Left cardiac atrium (tissue), 4 donors: ENCODE measurements at regions of chr2 and their contacts with region 1.

Region 1: DNA sequence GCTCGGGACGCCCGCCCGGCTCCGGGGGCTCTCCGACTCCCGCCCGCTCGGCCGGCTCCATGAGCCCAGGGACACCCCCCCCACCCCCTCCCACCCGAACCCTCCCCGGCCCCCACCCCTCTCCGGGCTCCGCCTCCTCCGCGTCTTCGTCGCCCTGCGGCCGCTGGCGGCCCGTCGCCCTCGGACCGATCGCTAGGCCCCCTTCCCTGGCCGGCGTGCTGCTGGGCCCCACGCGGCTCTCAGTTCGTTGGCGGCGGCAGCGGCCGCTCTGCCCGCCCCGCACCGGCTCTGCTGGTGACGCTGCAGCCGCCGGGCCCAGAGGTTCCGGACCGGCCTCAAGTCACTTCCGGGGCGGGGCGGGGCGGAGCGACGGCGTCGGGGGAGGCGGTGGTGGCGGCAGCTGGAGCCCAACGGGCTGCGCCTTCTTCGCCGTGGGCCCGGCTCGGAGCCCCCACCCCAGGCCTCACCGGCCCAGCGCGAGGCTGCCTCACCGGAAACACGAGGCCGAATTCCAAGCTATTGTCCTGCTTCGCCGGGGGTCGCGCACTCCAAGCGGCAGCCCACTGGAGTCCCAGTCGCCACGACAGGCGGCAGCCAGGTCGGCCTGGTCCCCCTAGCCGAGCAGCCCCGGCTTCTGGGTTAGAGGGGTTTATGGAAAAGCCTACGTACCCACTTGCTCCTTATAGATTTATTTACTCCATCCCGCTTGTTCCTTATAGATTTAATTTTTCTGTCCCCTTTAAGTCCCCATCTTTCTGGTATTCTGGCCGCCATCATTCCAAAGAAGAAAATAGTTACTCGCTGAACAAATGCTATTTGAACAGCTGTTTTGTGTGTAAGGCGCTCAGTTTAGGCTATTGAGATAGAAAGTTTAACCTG is at the start of gene PSME4:
- DNase-seq: peak; percentile 97
- ATAC-seq: peak; percentile 97
- total RNA-seq, gene PSME4: 37.8 to 73.1 TPM

Region 2: GRCh38 chr2:53880756-53881155 is 90.2 kb before region 1 on chr2:
- intact Hi-C with region 1: no loop called
- DNase-seq: no peak
- ATAC-seq: no peak

Region 3: DNA sequence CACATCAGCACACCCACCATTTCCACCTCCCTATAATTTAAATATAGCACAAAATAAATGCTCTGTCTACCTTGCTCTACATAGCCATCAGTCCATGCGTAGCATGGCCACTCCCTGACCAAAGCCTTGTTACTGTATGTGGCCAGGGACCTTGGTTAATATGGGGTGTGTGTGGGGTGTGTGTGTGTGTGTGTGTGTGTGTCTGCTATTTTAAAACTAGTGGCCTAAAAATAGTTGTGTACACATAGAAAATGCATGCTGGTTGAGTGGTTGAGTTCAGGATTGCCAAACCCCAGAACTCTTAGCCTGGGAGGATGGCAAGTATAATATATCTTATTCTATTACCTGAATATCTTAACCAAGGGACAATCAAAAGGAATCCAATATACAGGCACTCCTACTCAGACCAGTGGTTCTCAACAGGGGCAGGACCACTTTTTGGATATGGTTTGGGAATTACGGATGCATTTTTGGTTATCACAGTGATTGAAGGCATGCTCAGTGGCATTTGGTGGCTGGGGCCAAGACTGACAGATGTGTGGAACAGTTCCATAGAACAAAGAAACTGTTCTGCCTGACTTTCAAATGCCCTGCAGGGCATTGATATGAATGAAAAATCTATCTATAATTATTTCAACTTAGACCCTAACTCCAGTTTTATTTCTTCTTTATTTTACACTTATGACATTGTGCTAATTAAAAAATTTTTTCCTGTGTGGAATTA is 72.1 kb after region 1 on chr2:
- intact Hi-C with region 1: loop called in 1 of 2 experiments (anchors 2 kb)
- DNase-seq: no peak
- ATAC-seq: peak; percentile 39 to 68

Region 4: DNA sequence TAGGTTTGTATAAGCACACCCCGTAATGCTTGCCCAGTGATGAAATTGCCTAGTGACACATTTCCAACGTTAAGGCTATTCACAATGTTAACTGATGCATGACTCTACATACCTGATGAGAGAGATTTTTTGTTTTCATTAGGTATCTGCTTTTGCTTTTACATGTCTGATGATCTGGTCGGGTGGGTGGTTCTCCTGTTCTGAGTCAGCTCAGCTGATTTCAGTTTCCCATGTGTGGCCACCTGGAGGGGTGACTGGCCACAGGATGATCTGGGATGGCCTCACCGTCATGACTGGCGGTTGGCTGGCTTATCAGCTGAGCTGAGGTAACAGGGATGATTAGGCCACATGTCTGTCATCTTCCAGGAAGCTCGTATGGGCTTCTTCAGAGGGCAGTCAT is 110.6 kb after region 1 on chr2:
- intact Hi-C with region 1: loop called in 1 of 2 experiments (anchors 10 kb)
- DNase-seq: no peak
- ATAC-seq: no peak